ENCODE measurements at regions of chr4 and their contacts with region 1.

Region 1: GRCh38 chr4:74376888-74377483 is 12.0 kb downstream of the EREG start:
- DNase-seq: peak in 4 of 5 donors; percentile 32 to 43 (median 36)
- H3K4me3 ChIP-seq: no peak overlapping the region
- H3K4me3 Mint-ChIP-seq: no peak overlapping the region
- H3K27ac ChIP-seq: no peak overlapping the region
- H3K27ac Mint-ChIP-seq: no peak overlapping the region
- H3K4me1 ChIP-seq: no peaks in the 10 kb centered on the region
- H3K4me1 Mint-ChIP-seq: no peaks in the 10 kb centered on the region
- H3K27me3 ChIP-seq: no peaks in the 10 kb centered on the region
- H3K27me3 Mint-ChIP-seq: peaks cover 2% of the 10 kb centered on the region in 2 donors

Region 2: GRCh38 chr4:74444891-74445642 is 68.1 kb after region 1 on chr4 and contains the start of gene AREG:
- CTCF ChIA-PET with region 1: interaction called, 16 read pairs
- POLR2A ChIA-PET with region 1: no interaction called
- intact Hi-C with region 1: loop called (anchors 1 kb)
- DNase-seq: peak; percentile 90 to 95 (median 92)
- H3K4me3 ChIP-seq: peak within 1 kb of the TSS; percentile 7 to 67
- H3K4me3 Mint-ChIP-seq: peak within 1 kb of the TSS; percentile 90 to 97 (median 94)
- H3K27ac ChIP-seq: peak within 1 kb of the TSS; percentile 84
- H3K27ac Mint-ChIP-seq: peak within 1 kb of the TSS; percentile 93 to 99 (median 97)
- H3K4me1 ChIP-seq: peaks cover 10% of the 10 kb centered on the region
- H3K4me1 Mint-ChIP-seq: peaks cover 5 to 14% (median 9%) of the 10 kb centered on the region in 4 donors
- H3K27me3 ChIP-seq: no peaks in the 10 kb centered on the region
- H3K27me3 Mint-ChIP-seq: peaks cover 0 to 2% of the 10 kb centered on the region in 2 donors
- total RNA-seq, gene AREG: 0.44 to 0.52 TPM

Region 3: DNA sequence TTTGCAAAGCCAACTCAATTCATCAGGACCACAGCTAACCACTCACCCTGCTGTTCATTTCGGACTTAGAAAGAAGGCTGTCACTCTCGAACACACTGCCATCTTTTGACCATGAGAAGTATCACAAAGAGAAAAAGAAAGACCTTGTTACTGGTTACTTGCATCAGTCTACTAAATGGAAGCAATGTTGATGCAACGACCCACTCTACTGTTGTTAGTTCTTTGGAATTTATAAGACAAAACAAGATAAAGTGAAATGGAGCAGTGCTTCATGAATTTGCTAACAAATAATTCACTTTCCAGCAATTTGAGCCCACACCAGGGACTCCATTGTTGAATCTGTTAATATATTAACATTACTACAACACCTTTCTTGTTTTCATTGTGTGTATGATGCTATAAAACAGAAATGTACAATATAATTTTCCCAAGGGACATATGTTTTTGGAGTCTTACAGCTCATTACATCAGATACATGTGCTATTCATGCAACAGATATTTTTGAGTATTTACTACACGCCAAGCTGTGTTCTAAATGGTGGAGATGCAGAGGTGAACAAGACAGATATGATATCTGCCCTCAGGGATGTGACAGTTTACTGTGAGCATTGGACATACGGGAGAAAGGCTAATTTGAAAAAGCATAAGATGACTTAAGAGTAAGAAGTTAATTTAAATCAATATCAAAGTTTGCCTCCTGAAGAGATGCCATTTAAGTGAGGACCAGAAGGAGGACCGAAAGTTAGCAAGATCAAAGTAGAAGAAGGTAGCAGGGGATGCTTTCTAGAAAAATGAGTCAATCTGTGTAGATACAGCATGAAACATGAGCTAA is 155.2 kb after region 1 on chr4:
- CTCF ChIA-PET with region 1: interaction called, 49 read pairs
- POLR2A ChIA-PET with region 1: no interaction called
- intact Hi-C with region 1: loop called (anchors 1 kb)
- DNase-seq: peak in 4 of 5 donors; percentile 4 to 22 (median 16)
- H3K4me3 ChIP-seq: no peak overlapping the region
- H3K4me3 Mint-ChIP-seq: no peak overlapping the region
- H3K27ac ChIP-seq: no peak overlapping the region
- H3K27ac Mint-ChIP-seq: peak overlapping the region in 1 of 7 donors; percentile 49
- H3K4me1 ChIP-seq: no peaks in the 10 kb centered on the region
- H3K4me1 Mint-ChIP-seq: no peaks in the 10 kb centered on the region
- H3K27me3 ChIP-seq: no peaks in the 10 kb centered on the region
- H3K27me3 Mint-ChIP-seq: peaks cover 4 to 7% of the 10 kb centered on the region in 2 donors

Region 4: GRCh38 chr4:74623041-74623440 is 246.1 kb after region 1 on chr4:
- CTCF ChIA-PET with region 1: interaction called, 7 read pairs
- POLR2A ChIA-PET with region 1: interaction called, 3 read pairs
- intact Hi-C with region 1: loop called (anchors 1 kb)
- DNase-seq: peak in 3 of 5 donors; percentile 6 to 23 (median 9)
- H3K4me3 ChIP-seq: no peak overlapping the region
- H3K4me3 Mint-ChIP-seq: no peak overlapping the region
- H3K27ac ChIP-seq: no peak overlapping the region
- H3K27ac Mint-ChIP-seq: peak overlapping the region in 2 of 7 donors; percentile 2 to 13
- H3K4me1 ChIP-seq: peaks cover 24% of the 10 kb centered on the region
- H3K4me1 Mint-ChIP-seq: peaks cover 10 to 34% (median 18%) of the 10 kb centered on the region in 4 donors
- H3K27me3 ChIP-seq: no peaks in the 10 kb centered on the region
- H3K27me3 Mint-ChIP-seq: peaks cover 6% of the 10 kb centered on the region in 2 donors